K562 (cell line): ENCODE measurements at regions of chr12 and their contacts with region 1.

Region 1: GRCh38 chr12:69157023-69157655 is 82.2 kb upstream of the CPSF6 start:
- DNase-seq: peak; percentile 71 to 89 (median 76)
- ATAC-seq: peak; percentile 97
- H3K4me3 ChIP-seq: no peak overlapping the region
- H3K27ac ChIP-seq: no peak overlapping the region
- H3K4me1 ChIP-seq: peaks cover 0 to 4% of the 10 kb centered on the region in 2 experiments; a peak in 1 of 5 replicates
- H3K27me3 ChIP-seq: peaks cover 0 to 7% of the 10 kb centered on the region in 2 experiments; a peak in 1 of 5 replicates
- CTCF ChIP-seq: peak; percentile 90 to 97 (median 92)
- EP300 ChIP-seq: no peak
- POLR2A ChIP-seq: no peak
- RAD21 ChIP-seq: peak; percentile 55 to 65

Region 2: GRCh38 chr12:69083689-69084088 is 73.5 kb before region 1 on chr12:
- CTCF ChIA-PET with region 1: no interaction called
- POLR2A ChIA-PET with region 1: no interaction called
- in situ Hi-C with region 1: no loop called
- intact Hi-C with region 1: no loop called
- DNase-seq: no peak
- ATAC-seq: no peak
- H3K4me3 ChIP-seq: no peak overlapping the region
- H3K27ac ChIP-seq: no peak overlapping the region
- H3K4me1 ChIP-seq: no peaks in the 10 kb centered on the region
- H3K27me3 ChIP-seq: no peaks in the 10 kb centered on the region; a peak in 1 of 5 replicates
- CTCF ChIP-seq: no peak
- EP300 ChIP-seq: no peak
- POLR2A ChIP-seq: no peak
- RAD21 ChIP-seq: no peak

Region 3: GRCh38 chr12:69196302-69197288 is 39.5 kb after region 1 on chr12:
- CTCF ChIA-PET with region 1: no interaction called
- POLR2A ChIA-PET with region 1: no interaction called
- in situ Hi-C with region 1: no loop called
- intact Hi-C with region 1: loop called (anchors 1 kb)
- DNase-seq: peak in 3 of 4 experiments; percentile 12 to 34 (median 17)
- ATAC-seq: peak; percentile 78
- H3K4me3 ChIP-seq: no peak overlapping the region
- H3K27ac ChIP-seq: no peak overlapping the region
- H3K4me1 ChIP-seq: no peaks in the 10 kb centered on the region
- H3K27me3 ChIP-seq: peaks cover 0 to 2% of the 10 kb centered on the region in 2 experiments; a peak in 2 of 5 replicates
- CTCF ChIP-seq: peak; percentile 47 to 57 (median 53); a peak in 4 of 6 replicates
- EP300 ChIP-seq: no peak
- POLR2A ChIP-seq: no peak
- RAD21 ChIP-seq: peak; percentile 7 to 35; a peak in 2 of 4 replicates

Region 4: GRCh38 chr12:69284131-69284530 is 127.0 kb after region 1 on chr12:
- CTCF ChIA-PET with region 1: no interaction called
- POLR2A ChIA-PET with region 1: no interaction called
- in situ Hi-C with region 1: loop called (anchors 10 kb)
- intact Hi-C with region 1: loop called (anchors 1 kb)
- DNase-seq: peak; percentile 36 to 92 (median 61)
- ATAC-seq: peak; percentile 100
- H3K4me3 ChIP-seq: no peak overlapping the region
- H3K27ac ChIP-seq: no peak overlapping the region; the same call in 2 of the 3 replicates
- H3K4me1 ChIP-seq: peaks cover 3 to 4% of the 10 kb centered on the region in 2 experiments; a peak in 3 of 5 replicates
- H3K27me3 ChIP-seq: no peaks in the 10 kb centered on the region
- CTCF ChIP-seq: peak; percentile 49 to 59 (median 54)
- EP300 ChIP-seq: no peak
- POLR2A ChIP-seq: no peak
- RAD21 ChIP-seq: peak in 1 of 2 experiments; percentile 26; a peak in 1 of 4 replicates

Region 5: DNA sequence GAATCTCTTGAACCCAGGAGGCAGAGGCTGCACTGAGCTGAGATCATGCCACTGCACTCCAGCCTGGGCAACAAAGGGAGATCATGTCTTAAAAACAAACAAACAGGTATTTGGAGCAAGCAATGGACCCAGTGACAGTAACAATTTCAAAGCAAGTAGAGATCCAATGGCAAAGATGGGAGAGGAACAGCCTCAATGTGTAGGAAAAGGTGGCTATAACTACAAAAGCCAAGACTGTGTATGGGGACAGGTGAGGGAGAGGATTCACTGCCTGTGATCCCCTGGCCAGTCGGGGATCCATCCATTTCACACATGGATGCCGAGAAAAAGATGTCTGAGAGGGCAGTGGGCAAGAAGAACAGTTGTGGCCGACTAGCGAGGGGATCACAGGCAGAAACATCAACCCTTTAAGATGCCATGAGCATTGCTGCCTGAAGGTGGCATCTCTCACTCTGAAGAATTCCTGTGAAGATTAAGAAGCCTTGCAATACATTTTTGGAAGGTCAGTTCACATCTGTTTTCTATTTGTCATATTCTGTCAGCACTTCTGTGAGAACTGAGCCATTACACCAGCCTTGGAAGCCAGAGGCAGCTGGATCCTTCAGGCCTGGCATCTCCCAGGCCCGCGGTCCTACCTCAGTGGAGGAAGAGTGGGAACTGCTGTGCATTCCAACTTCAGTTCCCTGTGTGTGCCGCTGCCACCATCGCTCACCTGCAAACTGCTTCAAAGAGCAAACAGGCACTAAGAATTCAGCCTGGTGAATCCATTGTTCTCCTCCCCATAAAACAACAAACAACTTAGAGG is 258.5 kb after region 1 on chr12:
- CTCF ChIA-PET with region 1: no interaction called
- POLR2A ChIA-PET with region 1: no interaction called
- in situ Hi-C with region 1: no loop called
- intact Hi-C with region 1: loop called (anchors 10 kb)
- DNase-seq: peak in 3 of 4 experiments; percentile 28 to 55 (median 43)
- ATAC-seq: peak; percentile 93
- H3K4me3 ChIP-seq: no peak overlapping the region
- H3K27ac ChIP-seq: no peak overlapping the region
- H3K4me1 ChIP-seq: peaks cover 3 to 8% of the 10 kb centered on the region in 2 experiments; a peak in 3 of 5 replicates
- H3K27me3 ChIP-seq: no peaks in the 10 kb centered on the region
- CTCF ChIP-seq: peak; percentile 69 to 76 (median 70)
- EP300 ChIP-seq: no peak
- POLR2A ChIP-seq: no peak
- RAD21 ChIP-seq: peak; percentile 63 to 77

Region 6: GRCh38 chr12:69879041-69879960 is 722.2 kb after region 1 on chr12:
- CTCF ChIA-PET with region 1: no interaction called
- POLR2A ChIA-PET with region 1: no interaction called
- in situ Hi-C with region 1: no loop called
- intact Hi-C with region 1: loop called (anchors 10 kb)
- DNase-seq: peak; percentile 74 to 80 (median 77)
- ATAC-seq: peak; percentile 99
- H3K4me3 ChIP-seq: no peak overlapping the region
- H3K27ac ChIP-seq: no peak overlapping the region
- H3K4me1 ChIP-seq: peaks cover 0 to 7% of the 10 kb centered on the region in 2 experiments; a peak in 2 of 5 replicates
- H3K27me3 ChIP-seq: peaks cover 5 to 12% of the 10 kb centered on the region in 2 experiments; a peak in 4 of 5 replicates
- CTCF ChIP-seq: peak; percentile 80 to 92 (median 92)
- EP300 ChIP-seq: no peak
- POLR2A ChIP-seq: no peak
- RAD21 ChIP-seq: peak; percentile 86 to 94